ENCODE measurements at regions of chr12 and their contacts with region 1.

Region 1: GRCh38 chr12:96399919-96400797 is at the start of gene CDK17:
- DNase-seq: no peak
- H3K4me3 ChIP-seq: peak within 1 kb of the TSS; percentile 82
- CTCF ChIP-seq: peak; percentile 43

Region 2: DNA sequence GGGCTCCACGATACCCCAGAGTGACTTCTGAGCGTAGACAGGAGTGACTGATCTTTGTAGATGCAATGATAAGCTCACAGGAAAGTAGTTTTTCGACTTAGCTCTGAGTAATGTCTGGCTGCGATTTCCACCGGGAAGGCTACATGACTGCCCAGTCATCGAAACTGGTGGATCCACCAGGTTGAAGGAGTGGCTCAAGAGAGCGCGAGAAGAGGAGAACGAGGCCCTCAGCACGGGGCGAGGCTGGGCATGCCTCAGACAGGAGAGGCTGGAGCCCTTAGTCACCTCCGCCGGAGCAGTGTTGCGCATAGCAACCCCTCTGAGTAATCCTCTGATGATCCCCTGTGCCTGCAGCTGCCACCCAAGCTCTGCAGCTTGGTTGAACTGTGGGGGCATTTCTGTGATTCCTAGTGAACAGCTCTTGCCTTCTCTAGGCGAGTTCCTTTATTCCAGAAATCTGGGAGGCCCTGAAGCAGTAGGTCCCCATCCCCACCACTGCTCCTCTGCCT is 180.4 kb before region 1 on chr12:
- CTCF ChIA-PET with region 1: interaction called, 13 read pairs
- POLR2A ChIA-PET with region 1: interaction called, 5 read pairs
- DNase-seq: peak; percentile 92
- H3K4me3 ChIP-seq: peak overlapping the region; percentile 34
- CTCF ChIP-seq: no peak

Region 3: GRCh38 chr12:96386794-96387193 is 13.4 kb before region 1 on chr12:
- CTCF ChIA-PET with region 1: interaction called, 28 read pairs
- POLR2A ChIA-PET with region 1: interaction called, 3 read pairs
- DNase-seq: no peak
- H3K4me3 ChIP-seq: no peak overlapping the region
- CTCF ChIP-seq: no peak

Region 4: GRCh38 chr12:96427269-96427729 is 27.1 kb after region 1 on chr12:
- CTCF ChIA-PET with region 1: interaction called, 65 read pairs
- POLR2A ChIA-PET with region 1: interaction called, 13 read pairs
- DNase-seq: peak; percentile 100
- H3K4me3 ChIP-seq: peak overlapping the region; percentile 55
- CTCF ChIP-seq: no peak

Region 5: DNA sequence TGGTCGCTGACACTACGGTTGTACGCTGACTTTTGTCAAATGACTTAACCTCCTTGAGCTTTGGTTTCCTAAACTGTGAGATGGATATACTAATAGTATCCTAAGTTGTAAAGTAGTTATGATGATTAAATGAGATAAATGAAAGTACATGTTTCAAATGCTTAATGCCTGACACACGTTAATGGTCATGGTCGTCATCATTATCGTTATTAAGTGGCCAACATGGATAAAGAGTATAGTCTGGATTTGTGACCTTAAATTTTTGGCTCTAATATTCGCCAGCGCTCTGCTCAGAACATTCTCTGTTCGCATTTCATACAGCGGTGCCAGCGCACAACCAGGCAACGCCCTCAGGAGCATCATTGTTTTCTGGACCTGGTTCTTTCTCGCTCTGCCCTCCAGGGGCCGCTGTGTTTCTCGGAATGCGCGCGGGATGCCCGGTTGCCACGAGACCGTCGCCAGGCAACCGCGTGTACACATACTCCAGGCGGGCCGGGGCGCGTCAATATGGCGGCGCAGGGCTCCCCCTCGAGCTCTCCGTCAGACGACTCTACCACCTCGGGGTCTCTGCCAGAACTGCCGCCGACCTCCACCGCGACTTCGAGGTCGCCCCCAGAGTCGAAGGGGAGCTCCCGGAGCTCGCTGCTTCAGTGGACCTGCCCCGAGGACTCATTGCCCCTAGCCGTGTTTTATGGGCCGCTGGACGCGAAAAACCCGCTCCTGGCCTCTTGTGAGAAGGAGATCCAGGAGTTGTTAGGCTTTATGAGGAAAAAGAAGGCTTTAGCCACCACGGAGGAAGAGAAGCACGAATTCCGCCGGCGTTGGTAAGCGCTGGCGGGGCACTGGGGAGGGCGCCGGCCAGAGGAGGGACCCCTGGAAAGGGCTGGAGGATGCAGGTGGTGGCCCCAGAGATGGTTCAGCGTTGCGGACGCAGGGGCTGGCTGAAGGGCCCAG is 89.2 kb after region 1 on chr12 and contains the start of gene CFAP54:
- CTCF ChIA-PET with region 1: interaction called, 46 read pairs
- POLR2A ChIA-PET with region 1: interaction called, 5 read pairs
- DNase-seq: no peak
- H3K4me3 ChIP-seq: peak within 1 kb of the TSS; percentile 89
- CTCF ChIP-seq: peak; percentile 90

Measured in AG04449 (cell line).